Spleen (tissue), 13 donors: ENCODE measurements at regions of chr12 and their contacts with region 1.

Region 1: DNA sequence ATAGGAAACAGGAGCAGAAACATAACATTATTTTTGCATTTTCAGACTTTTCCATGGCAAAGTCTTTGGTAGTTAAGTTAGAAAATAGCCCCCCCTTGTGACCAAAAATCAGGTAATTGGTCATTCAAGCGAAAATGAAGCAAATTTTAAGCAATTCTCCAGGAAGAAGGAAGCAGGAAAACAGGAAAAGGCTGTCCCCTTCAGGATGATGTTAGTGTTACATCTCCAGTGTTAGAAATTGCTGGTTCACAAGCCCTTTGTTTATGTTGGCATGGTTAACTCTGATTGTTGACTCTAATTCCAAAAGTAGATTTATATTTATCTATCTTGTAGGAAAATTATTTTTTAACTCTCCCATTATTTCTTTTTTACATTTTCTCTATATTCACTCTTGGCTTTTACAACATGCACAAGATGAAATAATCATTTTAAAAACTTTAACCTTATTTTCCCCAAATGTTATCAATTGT is 18.8 kb upstream of the GAS2L3 start:
- DNase-seq: no peak
- H3K4me3 ChIP-seq: no peak overlapping the region
- H3K27ac ChIP-seq: no peak overlapping the region
- H3K4me1 ChIP-seq: no peaks in the 10 kb centered on the region
- H3K27me3 ChIP-seq: no peaks in the 10 kb centered on the region
- CTCF ChIP-seq: peak; percentile 40 to 84 (median 66)
- POLR2A ChIP-seq: no peak

Region 2: GRCh38 chr12:100234598-100235304 is 319.9 kb before region 1 on chr12:
- intact Hi-C with region 1: loop called (anchors 10 kb)
- DNase-seq: no peak
- H3K4me3 ChIP-seq: no peak overlapping the region
- H3K27ac ChIP-seq: no peak overlapping the region
- H3K4me1 ChIP-seq: no peaks in the 10 kb centered on the region
- H3K27me3 ChIP-seq: no peaks in the 10 kb centered on the region
- CTCF ChIP-seq: peak; percentile 16 to 66 (median 54)
- POLR2A ChIP-seq: no peak

Region 3: DNA sequence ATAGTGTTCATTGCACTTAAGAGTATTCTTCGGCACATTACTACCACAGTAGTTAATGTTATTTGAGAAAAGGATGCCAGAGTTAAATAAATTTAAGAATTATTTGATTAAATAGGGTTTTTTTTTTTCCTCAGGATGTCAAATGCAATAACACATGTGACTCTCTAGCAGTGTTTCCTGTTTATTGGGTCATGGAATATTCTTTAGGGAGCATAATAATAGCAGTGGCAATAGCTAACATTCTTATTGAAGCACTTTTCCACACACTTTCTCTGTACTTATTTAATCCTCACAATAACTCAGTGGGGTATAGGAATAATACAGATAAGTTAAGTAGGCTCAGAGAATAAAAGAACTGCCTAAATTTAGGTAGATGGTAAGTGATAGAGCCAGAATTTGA is 243.3 kb before region 1 on chr12:
- intact Hi-C with region 1: no loop called
- DNase-seq: no peak
- H3K4me3 ChIP-seq: no peak overlapping the region
- H3K27ac ChIP-seq: no peak overlapping the region
- H3K4me1 ChIP-seq: no peaks in the 10 kb centered on the region
- H3K27me3 ChIP-seq: no peaks in the 10 kb centered on the region
- CTCF ChIP-seq: no peak
- POLR2A ChIP-seq: no peak

Region 4: DNA sequence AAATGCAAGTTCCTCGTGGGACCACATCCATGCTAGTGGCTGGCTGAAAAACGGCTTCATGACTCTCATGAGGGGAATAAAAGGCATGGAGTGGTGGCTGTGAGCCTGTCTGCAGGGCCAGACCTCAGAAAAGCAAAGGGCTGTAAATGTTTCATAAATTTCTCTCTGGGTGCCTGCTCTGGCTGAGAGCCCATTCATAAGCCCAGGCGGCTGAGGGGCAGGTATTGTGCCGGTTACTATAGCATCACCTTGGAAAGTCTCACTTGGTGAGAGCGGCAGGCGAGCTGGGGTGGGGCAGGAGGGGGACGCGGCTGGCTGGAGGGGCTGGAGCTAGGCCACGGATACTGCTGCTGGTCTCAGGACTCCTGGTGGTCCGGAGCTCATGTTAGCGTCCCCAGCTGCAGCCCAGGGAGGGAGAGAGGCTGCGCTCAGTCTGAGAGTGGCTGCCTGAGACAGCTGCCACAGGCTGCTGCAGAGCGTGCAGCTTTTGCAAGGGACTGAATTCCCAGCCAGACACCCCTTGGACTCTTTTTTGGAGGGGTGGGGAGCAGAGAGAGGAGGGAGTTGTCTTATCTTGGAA is 197.9 kb before region 1 on chr12 and contains the start of gene SLC17A8:
- intact Hi-C with region 1: loop called (anchors 10 kb)
- DNase-seq: no peak
- H3K4me3 ChIP-seq: no peak within 1 kb of the TSS
- H3K27ac ChIP-seq: no peak within 1 kb of the TSS
- H3K4me1 ChIP-seq: no peaks in the 10 kb centered on the region
- H3K27me3 ChIP-seq: peaks cover 0 to 37% (median 0%) of the 10 kb centered on the region in 7 donors
- CTCF ChIP-seq: no peak
- POLR2A ChIP-seq: no peak
- total RNA-seq, gene SLC17A8: 0.34 TPM in 1 of 7 donors, not detected in the others